ENCODE measurements at regions of chr1 and their contacts with region 1.

Region 1: DNA sequence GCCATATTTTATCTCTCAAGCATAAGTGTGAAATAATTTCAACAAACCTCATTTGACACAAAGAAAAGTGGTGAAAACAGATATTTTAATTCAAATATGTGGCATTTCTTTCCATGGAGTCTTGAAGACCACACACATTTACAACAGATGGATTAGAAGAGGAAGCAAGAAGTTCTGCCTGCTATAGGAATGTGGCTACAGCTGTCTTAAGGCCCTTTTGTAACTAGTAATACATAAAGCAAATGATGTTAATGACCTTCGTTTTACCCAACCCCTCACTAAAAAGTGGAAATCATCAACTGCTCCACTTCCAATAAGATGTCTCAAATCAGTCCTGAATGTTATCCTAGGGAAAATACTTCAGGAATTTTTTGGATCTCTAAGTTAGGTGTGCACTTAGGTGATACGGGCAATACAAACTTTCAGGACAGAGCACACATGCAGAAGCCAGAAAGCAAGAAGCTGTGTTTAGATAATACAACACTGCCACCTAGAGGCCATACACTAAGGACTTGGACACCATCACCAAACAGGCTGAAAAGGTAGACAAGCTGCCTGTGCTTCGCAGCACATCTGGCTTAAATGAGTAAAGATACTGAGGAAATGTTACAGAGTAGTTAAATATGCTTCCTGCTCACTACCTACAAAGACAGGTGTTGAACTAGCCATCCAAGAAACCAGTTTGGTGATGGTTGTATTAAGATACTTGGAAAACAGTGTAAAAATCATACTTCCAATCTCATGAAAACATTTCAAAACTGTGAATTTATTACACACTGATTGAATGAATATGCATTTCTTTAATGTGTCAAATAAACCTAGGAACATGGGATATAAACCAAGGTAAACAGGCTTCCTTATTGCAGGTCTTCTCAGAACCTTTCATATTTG is 24.4 kb downstream of the RRAGC start:
- DNase-seq: peak; percentile 86
- H3K4me3 Mint-ChIP-seq: no peak overlapping the region
- H3K27ac Mint-ChIP-seq: no peak overlapping the region
- H3K4me1 Mint-ChIP-seq: peaks cover 6% of the 10 kb centered on the region
- H3K27me3 Mint-ChIP-seq: peaks cover 12% of the 10 kb centered on the region
- CTCF ChIP-seq: peak; percentile 70

Region 2: DNA sequence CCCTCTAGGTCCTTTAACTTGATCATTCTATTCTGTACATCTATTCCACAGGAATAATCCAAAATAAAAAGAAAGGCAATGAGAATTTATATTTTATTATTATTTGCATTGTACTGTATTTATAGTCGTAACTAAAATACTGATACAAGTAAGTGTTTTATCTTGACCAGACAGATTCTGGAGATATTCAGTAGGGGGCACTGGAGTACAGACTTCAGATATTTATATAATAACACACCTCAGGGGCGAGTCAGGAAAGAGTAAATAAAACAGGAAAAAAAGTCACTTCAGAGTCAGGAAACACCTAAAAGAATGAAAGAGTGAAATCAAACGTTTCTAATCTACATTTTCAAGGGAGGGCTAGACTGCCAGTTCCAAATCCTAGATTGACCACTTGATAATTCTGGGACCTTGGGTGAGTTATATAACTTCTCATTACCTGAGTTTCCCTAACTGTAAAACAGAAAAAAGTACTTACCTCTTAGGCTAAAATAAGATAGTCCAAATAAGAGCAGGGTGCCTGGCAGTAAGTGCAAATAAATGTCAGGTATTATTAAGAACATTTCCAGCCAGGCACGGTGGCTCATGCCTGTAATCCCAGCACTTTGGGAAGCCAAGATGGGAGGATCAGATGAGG is 944.7 kb before region 1 on chr1:
- CTCF ChIA-PET with region 1: no interaction called
- POLR2A ChIA-PET with region 1: no interaction called
- intact Hi-C with region 1: loop called (anchors 10 kb)
- DNase-seq: peak; percentile 43
- H3K4me3 Mint-ChIP-seq: no peak overlapping the region
- H3K27ac Mint-ChIP-seq: no peak overlapping the region
- H3K4me1 Mint-ChIP-seq: no peaks in the 10 kb centered on the region
- H3K27me3 Mint-ChIP-seq: no peaks in the 10 kb centered on the region
- CTCF ChIP-seq: peak; percentile 42

Region 3: DNA sequence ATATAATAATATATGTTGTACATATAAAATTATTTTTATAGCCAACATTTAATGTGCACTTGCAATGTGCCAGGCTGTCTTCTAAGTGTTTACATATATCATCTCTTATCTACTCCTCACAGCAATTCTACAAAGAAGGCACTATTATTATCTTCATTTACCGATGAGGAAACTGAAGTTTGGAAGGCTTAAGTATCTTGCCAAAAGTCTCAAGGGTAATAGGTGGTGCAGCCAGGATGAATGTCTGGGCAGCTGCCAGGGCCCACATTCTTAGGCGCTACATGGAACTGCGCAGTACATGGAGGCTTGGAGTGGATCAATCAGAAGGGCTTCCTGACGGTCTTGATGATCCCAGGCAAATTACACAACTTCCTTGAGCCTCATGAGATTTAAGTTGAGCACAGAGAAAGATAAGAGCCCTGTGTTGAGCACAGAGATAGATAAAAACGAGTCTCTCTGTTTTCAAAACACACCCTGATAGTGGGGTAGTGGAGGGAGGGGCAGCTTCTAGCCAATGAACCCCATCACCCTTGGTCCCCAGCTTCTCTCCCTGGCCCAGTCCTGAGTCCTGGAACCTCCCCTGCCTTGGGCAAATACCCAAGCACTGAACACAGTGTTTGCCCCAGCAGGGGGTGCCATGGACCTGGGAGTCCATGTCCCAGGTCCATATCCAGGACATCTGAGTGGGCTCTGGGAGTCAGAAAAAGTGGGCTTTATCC is 797.8 kb before region 1 on chr1:
- CTCF ChIA-PET with region 1: interaction called, 5 read pairs
- POLR2A ChIA-PET with region 1: interaction called, 3 read pairs
- intact Hi-C with region 1: loop called (anchors 1 kb)
- DNase-seq: peak; percentile 43
- H3K4me3 Mint-ChIP-seq: no peak overlapping the region
- H3K27ac Mint-ChIP-seq: no peak overlapping the region
- H3K4me1 Mint-ChIP-seq: peaks cover 6% of the 10 kb centered on the region
- H3K27me3 Mint-ChIP-seq: peaks cover 7% of the 10 kb centered on the region
- CTCF ChIP-seq: no peak

Region 4: DNA sequence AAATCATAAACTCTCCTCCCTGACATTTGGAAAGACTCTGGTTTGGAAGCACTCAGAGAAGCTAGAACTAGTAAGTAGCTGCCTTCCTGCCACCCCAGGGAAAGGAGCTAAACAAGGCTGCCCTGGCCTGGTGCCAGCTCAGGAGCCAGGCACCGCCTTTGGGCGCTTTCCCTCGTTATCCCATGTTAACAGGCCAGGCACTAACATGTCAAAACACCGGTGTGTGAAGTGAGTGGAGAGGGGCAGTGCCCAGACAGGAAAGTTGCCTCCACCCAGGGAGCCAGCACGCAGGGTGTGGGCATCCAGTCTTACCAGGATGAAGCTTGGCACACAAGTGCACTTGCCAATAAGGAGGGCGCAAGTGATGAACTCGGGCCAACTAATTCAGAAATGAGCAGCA is 322.4 kb before region 1 on chr1:
- CTCF ChIA-PET with region 1: interaction called, 4 read pairs
- POLR2A ChIA-PET with region 1: no interaction called
- intact Hi-C with region 1: loop called (anchors 10 kb)
- DNase-seq: peak; percentile 20
- H3K4me3 Mint-ChIP-seq: no peak overlapping the region
- H3K27ac Mint-ChIP-seq: no peak overlapping the region
- H3K4me1 Mint-ChIP-seq: no peaks in the 10 kb centered on the region
- H3K27me3 Mint-ChIP-seq: peaks cover 39% of the 10 kb centered on the region
- CTCF ChIP-seq: no peak

Region 5: DNA sequence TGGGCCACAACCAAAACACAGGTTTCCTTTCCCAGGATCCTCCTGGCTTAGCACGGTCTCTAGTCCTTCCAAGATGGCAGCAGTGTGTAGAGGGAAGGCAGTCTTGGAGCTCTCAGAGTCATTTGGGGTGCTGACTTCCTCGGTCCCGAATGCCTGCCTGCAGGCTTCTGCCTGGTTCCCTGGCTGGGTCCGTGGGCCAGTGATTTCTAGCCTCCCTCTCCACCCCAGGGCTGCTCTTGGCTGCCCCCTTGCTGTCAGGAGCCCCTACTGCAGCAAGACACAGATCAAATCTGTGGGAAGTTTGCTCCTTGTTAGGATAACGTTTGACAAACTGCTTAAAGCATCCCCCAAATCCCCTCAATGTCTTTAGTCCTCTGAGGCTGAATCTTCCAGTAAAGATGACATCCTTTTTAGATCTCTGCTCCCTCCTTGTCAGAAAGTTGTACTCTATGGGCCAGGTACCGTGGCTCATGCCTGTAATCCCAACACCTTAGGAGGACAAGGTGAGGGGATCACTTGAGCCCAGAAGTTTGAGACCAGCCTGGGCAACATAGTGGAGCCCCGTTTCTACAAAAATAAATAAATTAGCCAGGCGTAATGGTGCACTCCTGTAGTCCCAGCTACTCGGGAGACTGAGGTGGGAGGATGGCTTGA is 248.1 kb before region 1 on chr1:
- CTCF ChIA-PET with region 1: no interaction called
- POLR2A ChIA-PET with region 1: no interaction called
- intact Hi-C with region 1: loop called (anchors 10 kb)
- DNase-seq: peak; percentile 53
- H3K4me3 Mint-ChIP-seq: no peak overlapping the region
- H3K27ac Mint-ChIP-seq: no peak overlapping the region
- H3K4me1 Mint-ChIP-seq: peaks cover 9% of the 10 kb centered on the region
- H3K27me3 Mint-ChIP-seq: peaks cover 13% of the 10 kb centered on the region
- CTCF ChIP-seq: peak; percentile 64

Region 6: DNA sequence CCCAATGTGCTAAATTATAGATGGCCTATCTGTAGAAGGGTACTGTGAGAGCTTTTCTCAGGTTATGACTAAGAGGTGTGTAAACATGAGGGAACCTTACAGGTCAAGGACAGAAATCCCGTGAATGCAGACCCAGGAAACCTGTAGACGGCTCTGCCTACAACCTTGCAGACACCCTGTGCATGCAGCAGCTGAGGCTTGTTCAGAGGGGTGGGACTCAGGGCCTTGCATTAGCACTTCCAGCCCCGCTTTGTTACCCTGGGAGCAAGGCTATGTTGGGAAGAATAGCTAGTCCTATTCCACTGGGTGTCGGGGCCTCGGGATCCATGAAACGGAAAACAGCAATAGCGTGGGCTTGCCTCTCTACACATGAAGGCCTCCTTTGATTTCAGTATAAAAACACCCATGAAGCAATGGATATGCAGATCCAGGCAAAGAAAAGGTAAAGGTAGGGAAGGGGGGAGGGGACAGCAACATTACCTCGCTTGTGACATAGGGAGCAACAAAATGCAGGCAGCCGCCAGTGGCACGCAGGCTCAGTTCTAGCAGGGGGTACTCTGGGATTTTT is 181.5 kb after region 1 on chr1:
- CTCF ChIA-PET with region 1: no interaction called
- POLR2A ChIA-PET with region 1: no interaction called
- intact Hi-C with region 1: no loop called
- DNase-seq: no peak
- H3K4me3 Mint-ChIP-seq: no peak overlapping the region
- H3K27ac Mint-ChIP-seq: no peak overlapping the region
- H3K4me1 Mint-ChIP-seq: no peaks in the 10 kb centered on the region
- H3K27me3 Mint-ChIP-seq: no peaks in the 10 kb centered on the region
- CTCF ChIP-seq: no peak

Measured in MCF 10A (cell line).